KBM-7 (cell line): ENCODE measurements at regions of chr11 and their contacts with region 1.

Region 1: GRCh38 chr11:19553683-19554333 is 158.8 kb upstream of the NAV2 start:
- DNase-seq: peak; percentile 68

Region 2: DNA sequence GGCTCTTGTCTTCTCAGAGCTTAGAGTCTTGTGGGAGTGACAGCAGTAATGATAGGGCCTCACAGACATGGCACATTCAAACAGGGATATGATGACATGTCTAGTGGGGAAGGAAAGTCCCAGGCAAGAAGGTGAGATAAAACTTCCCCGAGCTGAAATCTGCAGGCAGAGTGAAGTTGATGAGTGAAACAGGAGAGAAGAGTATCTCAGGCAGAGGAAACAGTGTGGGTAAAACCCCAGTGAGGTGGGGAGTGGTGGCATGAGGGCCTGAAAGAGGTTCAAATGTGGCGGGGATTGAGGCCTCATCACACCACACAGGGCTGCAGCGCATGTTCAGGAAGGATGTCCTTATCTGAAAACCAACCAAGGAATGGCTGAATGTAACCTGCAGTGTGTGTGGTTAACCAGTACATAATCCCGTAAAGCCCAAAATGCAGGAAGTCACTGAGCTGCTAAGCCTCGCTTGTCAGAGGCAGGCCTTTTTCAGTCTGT is 159.2 kb before region 1 on chr11:
- in situ Hi-C with region 1: no loop called
- DNase-seq: no peak

Region 3: DNA sequence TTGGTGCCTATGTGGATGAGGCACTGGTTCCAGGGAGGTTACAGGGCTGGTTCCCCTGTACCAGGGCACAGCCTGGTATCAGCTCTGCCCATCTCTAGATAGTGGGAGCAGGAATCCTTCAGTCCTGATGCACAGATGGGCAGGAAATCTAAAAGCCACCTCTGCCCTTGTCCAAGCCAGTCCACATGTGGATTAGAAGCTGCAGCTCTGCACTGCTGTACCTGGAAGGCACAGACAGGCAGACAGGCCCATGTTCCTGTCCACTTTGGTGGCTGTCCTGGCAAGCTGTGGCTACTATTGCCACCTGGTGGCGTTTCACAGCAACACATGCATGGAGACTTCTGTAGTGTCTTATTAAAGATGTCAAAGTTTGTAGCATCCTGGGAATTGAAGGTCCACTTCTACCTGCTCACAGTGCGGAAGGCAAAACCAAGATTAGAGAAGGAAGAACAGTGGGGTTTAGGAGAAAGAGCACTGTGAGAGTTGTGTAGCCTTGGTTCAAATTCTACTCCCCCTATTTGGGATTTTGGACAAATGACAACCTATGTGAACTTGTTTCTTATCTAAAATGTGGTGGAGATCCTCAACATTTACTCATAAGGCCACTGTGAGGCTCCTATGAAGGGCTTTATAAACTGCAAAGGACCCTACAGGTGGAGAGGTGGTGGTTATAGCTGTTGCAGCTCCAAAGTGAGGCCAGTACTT is 188.9 kb after region 1 on chr11:
- in situ Hi-C with region 1: loop called (anchors 25 kb)
- DNase-seq: peak; percentile 66

Region 4: GRCh38 chr11:19879307-19880087 is 325.7 kb after region 1 on chr11:
- in situ Hi-C with region 1: no loop called
- DNase-seq: no peak

Region 5: DNA sequence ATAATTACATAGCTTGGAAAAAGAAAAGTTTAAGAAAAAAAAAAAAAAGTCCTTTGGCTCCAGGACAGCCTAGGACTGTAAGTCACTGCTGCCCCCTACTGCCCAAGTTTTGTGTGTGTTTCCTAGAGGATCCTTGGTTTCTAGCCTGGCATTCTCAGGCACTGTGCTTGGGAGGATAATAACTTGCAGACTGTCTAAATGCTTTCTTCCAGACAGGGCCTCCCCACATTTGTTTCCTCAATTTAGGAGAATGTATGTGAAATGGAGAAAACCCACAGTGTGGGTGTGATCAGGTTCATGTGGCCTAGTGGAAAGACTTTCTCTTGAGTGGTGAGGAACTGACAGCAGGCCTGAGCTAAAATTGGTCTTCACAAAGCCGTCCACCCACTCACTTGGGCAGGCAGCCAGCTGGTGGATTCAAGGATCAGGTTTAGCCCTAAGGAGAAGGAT is 349.8 kb after region 1 on chr11:
- in situ Hi-C with region 1: loop called (anchors 25 kb)
- DNase-seq: peak; percentile 55